ENCODE measurements at regions of chr15 and their contacts with region 1.

Region 1: GRCh38 chr15:56428821-56429458 is 36.0 kb downstream of the MNS1 start:
- DNase-seq: peak; percentile 39
- ATAC-seq: peak; percentile 71
- H3K4me3 ChIP-seq: no peak overlapping the region
- H3K27ac ChIP-seq: no peak overlapping the region
- H3K4me1 ChIP-seq: no peaks in the 10 kb centered on the region
- H3K27me3 ChIP-seq: no peaks in the 10 kb centered on the region
- CTCF ChIP-seq: peak; percentile 64
- POLR2A ChIP-seq: no peak
- RAD21 ChIP-seq: peak; percentile 56

Region 2: GRCh38 chr15:55661428-55661827 is 767.5 kb before region 1 on chr15:
- CTCF ChIA-PET with region 1: no interaction called
- POLR2A ChIA-PET with region 1: no interaction called
- dilution Hi-C with region 1: no loop called
- in situ Hi-C with region 1: loop called (anchors 25 kb)
- intact Hi-C with region 1: no loop called
- DNase-seq: peak; percentile 33
- ATAC-seq: peak; percentile 44; the same call in 1 of the 2 replicates
- H3K4me3 ChIP-seq: no peak overlapping the region
- H3K27ac ChIP-seq: no peak overlapping the region
- H3K4me1 ChIP-seq: peaks cover 2% of the 10 kb centered on the region
- H3K27me3 ChIP-seq: no peaks in the 10 kb centered on the region
- CTCF ChIP-seq: no peak
- POLR2A ChIP-seq: no peak
- RAD21 ChIP-seq: no peak

Region 3: DNA sequence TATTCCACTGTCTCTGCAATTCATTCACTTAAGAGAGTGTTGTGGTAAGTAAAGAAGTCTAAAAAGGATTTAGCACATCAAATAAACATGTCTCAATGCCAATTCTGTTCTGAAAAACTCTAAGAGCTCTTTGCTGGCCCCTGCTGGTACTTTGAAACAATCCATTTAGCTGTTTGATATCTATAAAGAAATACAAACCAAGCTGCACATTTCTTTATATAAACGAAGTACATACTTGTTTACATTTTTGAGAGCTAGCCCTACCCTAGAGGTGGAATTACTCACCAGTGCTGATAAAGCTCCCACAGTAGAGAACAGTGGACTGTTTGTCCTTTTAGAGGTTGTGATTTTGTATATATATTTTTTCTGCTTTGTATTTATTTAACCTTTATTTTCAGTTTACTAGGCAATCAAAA is 511.1 kb before region 1 on chr15:
- CTCF ChIA-PET with region 1: no interaction called
- POLR2A ChIA-PET with region 1: no interaction called
- dilution Hi-C with region 1: no loop called
- in situ Hi-C with region 1: no loop called
- intact Hi-C with region 1: loop called (anchors 10 kb)
- DNase-seq: peak; percentile 96
- ATAC-seq: peak; percentile 89
- H3K4me3 ChIP-seq: no peak overlapping the region
- H3K27ac ChIP-seq: no peak overlapping the region
- H3K4me1 ChIP-seq: no peaks in the 10 kb centered on the region
- H3K27me3 ChIP-seq: no peaks in the 10 kb centered on the region
- CTCF ChIP-seq: peak; percentile 86
- POLR2A ChIP-seq: no peak
- RAD21 ChIP-seq: peak; percentile 71

Region 4: DNA sequence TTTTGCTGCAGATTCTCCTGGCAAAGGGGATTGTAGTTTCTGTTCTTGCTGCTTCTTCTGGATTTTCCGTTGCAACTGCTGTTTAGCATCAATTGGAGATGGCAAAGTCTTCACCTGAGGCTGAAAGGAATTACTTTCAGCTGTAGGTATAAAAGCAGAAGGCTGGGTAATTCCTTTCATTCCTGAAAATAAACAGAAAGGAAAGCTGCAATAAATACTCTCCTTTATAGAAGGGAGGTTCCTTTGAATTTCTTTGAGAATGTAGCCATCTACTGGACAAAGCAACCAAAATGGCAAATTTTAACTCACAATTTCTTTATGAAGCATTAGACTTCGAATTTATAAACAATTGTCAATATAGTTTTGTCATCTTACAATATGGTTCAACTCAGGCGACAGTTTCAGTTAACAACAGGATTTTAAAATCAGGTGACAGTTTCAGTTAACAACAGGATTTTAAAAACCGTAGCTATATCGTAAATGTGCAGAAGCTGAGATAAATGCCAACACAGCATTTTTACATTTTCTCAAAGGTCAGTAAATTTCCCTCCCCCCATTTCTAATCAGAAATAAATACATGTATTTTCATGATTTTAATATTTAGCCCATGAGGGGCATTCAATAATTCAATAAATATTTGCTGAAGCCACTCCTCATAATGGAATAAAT is 330.6 kb before region 1 on chr15:
- CTCF ChIA-PET with region 1: no interaction called
- POLR2A ChIA-PET with region 1: no interaction called
- dilution Hi-C with region 1: no loop called
- in situ Hi-C with region 1: no loop called
- intact Hi-C with region 1: loop called (anchors 10 kb)
- DNase-seq: peak; percentile 21
- ATAC-seq: peak; percentile 14; the same call in 1 of the 2 replicates
- H3K4me3 ChIP-seq: no peak overlapping the region
- H3K27ac ChIP-seq: no peak overlapping the region
- H3K4me1 ChIP-seq: no peaks in the 10 kb centered on the region
- H3K27me3 ChIP-seq: no peaks in the 10 kb centered on the region
- CTCF ChIP-seq: peak; percentile 40
- POLR2A ChIP-seq: no peak
- RAD21 ChIP-seq: peak; percentile 41

Region 5: DNA sequence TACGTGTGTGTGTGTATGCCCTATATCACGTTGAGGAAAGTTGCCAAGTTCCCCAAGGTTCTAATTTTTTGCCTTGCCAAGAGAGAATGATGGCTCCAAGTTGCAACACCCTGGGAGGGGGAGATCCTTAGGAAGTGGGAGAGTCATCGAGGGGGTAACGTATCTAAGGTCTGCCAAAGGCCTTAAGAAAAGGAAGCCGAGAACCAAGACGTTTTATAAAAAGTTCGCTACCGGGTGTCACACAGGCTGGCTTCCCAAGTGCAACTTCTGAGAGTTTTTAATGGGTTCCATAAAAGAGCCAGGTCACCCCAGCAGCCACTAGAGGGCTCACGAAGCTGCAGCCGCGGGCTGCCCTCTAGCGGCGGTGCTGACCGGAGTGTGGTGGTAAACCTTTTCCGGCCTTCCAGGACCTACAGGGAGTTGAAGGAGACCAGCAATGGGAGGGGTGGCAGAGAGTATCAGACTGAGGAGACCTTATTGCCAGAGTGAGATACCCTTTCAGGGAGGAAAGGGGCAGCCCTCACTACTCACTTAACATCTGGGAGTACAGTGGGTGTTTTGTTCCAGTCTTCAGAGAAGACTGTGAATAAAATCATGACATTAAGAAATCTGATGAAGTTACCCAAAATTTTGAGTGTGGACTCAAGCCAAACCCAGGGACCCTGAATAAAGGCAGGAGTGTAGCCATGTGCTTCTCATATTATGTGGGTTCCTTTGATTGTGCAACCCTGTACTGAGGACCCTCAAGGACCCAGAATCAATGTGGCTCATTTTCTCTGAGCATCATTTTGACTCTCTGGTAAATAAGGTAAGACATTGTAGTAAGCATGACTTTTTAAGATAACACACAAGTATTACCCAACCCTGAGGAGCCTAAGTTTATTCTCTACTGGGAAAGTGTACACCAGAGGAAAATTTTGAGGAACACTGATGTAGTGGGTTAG is 182.8 kb before region 1 on chr15:
- CTCF ChIA-PET with region 1: interaction called, 3 read pairs
- POLR2A ChIA-PET with region 1: no interaction called
- dilution Hi-C with region 1: no loop called
- in situ Hi-C with region 1: no loop called
- intact Hi-C with region 1: loop called (anchors 1 kb)
- DNase-seq: peak; percentile 83
- ATAC-seq: peak; percentile 50
- H3K4me3 ChIP-seq: peak overlapping the region; percentile 21; the same call in 1 of the 2 replicates
- H3K27ac ChIP-seq: no peak overlapping the region
- H3K4me1 ChIP-seq: peaks cover 4% of the 10 kb centered on the region
- H3K27me3 ChIP-seq: no peaks in the 10 kb centered on the region
- CTCF ChIP-seq: peak; percentile 100; the same call in 1 of the 2 replicates
- POLR2A ChIP-seq: no peak
- RAD21 ChIP-seq: peak; percentile 78

Measured in IMR-90 (cell line).